ENCODE measurements at regions of chr7 and their contacts with region 1.

Region 1: GRCh38 chr7:55365675-55366460 is 731 bp downstream of the LANCL2 start:
- DNase-seq: peak; percentile 90 to 99 (median 95)

Region 2: GRCh38 chr7:54764861-54765260 is 601.0 kb before region 1 on chr7:
- intact Hi-C with region 1: loop called (anchors 5 kb)
- DNase-seq: no peak

Region 3: DNA sequence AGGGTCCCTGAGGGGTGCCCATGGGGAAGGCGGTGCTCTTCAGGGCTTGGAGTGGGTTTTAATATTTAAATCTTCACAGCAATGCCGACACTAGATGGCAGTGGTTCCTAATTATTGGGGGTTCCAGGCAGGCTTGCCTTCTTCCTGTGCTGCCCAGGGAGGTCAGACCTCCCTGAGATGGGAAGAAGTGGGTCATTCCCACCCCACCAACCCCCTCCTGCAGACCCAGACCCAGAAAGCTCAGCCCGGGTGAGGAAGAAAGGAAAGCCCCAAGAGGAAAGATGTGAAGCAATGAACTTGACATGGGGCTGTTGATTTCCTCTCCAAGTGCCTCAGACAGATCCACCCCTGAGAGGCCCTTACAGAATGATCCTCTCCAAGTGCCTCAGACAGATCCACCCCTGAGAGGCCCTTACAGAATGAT is 85.8 kb before region 1 on chr7:
- intact Hi-C with region 1: loop called (anchors 2 kb)
- DNase-seq: peak in 6 of 10 donors; percentile 51 to 89 (median 62)

Region 4: GRCh38 chr7:55288070-55288824 is 77.6 kb before region 1 on chr7:
- intact Hi-C with region 1: loop called (anchors 2 kb)
- DNase-seq: no peak

Region 5: DNA sequence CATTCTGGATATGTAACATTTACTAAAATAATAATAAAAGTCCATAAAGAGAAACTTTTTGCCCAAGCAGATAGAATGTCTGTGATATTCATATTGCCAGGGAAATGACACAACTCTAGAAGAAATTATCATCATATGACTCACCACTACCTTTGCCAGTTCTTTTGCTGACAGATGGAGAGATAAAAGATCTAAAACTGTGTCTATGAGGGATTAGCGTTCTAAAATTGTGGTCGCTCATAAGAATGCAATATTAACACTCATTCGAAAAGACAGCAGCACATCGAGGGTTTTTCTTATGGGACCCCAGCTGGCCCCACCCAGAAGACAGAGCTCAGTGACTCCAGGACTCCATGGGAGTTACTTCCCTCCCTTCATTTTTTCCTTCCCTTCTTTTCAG is 17.4 kb before region 1 on chr7:
- intact Hi-C with region 1: no loop called
- DNase-seq: no peak

Region 6: DNA sequence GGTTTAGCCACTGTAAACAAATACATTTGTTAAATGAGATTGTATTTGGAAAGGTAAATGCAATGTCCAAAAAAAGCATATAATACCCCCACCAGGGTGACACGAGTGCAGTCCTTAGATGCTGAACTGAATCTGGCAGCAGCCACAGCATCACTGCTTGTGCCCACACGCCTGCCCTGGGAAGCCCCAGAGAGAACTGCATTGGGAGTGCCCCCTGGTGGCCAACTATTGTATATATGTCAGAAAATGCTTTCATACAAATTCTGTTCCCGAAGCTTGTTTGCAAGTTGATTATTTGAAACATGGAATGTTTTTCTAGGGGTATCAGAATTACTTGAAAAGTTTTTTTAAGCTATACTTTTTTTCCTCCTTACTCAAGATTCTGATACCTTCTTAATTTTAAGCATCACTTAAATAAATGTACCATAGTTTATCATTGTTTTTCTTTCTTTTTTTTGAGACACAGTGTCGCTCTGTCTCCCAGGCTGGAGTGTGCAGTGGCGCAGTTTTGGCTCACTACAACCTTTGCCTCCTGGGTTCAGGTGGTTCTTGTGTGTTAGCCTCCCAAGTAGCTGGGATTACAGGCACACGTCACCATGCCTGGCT is 49.4 kb after region 1 on chr7:
- intact Hi-C with region 1: loop called (anchors 5 kb)
- DNase-seq: peak; percentile 59 to 97 (median 87)

Region 7: DNA sequence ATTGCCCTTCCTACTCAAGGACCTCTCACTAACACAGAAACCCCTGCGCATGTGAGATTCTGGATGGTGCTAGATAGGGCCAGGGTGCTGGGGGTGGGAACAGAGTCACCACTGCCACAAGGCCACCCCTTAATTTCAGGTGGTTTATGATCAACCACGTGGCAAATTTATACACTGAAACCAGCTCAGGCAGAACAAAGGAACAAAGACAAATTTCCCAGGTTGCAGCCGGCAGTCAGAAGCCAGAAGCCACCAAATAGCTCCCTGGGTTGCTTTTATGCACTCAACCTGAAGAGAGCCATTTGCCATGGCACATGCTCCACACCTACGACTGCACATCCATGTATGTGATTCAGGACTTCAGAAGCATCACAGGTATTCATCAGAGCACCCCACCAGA is 203.9 kb after region 1 on chr7:
- intact Hi-C with region 1: loop called (anchors 10 kb)
- DNase-seq: no peak

Region 8: DNA sequence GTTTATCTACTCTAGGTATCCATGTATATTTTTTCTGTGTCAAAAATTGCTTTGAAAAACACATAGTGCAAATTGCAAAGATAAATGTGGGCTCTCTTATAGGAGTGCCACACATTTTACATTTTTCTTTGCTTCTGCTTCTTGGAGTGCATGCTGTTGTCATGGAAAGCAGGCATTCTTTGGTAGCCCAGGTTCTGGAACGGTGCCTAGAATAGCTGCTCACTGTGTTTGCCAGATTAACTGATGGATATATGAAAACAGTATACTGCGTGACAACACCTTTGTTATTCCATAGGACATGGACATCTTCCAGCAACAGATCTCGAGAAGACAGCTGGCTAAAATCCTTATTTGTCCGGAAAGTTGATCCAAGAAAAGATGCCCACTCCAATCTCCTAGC is 612.0 kb after region 1 on chr7:
- intact Hi-C with region 1: no loop called
- DNase-seq: peak in 5 of 10 donors; percentile 17 to 77 (median 20)